ENCODE measurements at regions of chr2 and their contacts with region 1.

Region 1: GRCh38 chr2:11129598-11130449 is 25.4 kb upstream of the SLC66A3 start:
- DNase-seq: no peak
- H3K4me3 ChIP-seq: peak overlapping the region; percentile 24 to 66 (median 35)
- H3K27ac ChIP-seq: peak overlapping the region; percentile 20 to 73 (median 42)
- H3K4me1 ChIP-seq: peaks cover 10 to 53% (median 25%) of the 10 kb centered on the region in 3 donors
- H3K27me3 ChIP-seq: peaks cover 0 to 12% (median 0%) of the 10 kb centered on the region in 4 donors
- CTCF ChIP-seq: peak; percentile 15 to 53 (median 30)
- POLR2A ChIP-seq: no peak

Region 2: DNA sequence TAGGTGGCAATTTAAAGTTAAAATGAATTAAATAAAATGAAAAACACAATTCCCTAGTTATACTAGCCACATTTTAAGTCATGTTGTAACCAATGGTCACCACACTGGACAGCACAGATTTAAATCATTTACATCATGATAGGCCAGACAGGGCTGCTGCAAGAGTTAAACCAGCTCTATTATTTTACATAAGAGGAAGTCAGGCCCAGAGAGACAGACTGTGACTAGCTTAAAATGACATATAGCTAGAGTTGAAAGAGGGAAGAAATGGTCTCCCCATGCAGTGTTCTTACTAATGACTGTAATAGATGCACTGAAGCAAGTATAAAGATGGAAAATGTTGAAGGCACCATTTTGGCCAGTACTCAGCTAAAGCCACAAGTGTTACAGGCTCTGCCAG is 95.1 kb after region 1 on chr2:
- intact Hi-C with region 1: loop called (anchors 10 kb)
- DNase-seq: no peak
- H3K4me3 ChIP-seq: no peak overlapping the region
- H3K27ac ChIP-seq: no peak overlapping the region
- H3K4me1 ChIP-seq: no peaks in the 10 kb centered on the region
- H3K27me3 ChIP-seq: no peaks in the 10 kb centered on the region
- CTCF ChIP-seq: no peak
- POLR2A ChIP-seq: no peak

Region 3: DNA sequence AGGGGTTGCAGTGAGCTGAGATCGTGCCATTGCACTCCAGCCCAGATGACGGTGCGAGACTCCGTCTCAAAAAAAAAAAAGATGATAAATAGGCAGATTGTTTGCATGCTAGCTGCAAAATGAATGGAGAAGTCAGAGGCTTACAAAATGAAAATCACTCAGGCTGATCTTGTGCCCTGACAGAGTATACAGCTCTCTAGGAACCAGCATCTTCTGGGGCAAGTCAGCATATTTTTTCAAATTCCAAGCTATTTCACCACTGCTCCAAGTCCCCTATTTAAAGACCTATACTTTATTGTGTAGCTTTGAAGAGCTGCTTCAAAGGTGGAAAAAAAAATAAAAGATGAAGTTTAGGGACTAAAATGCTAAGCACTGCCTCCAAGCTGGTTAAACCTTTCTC is 330.0 kb after region 1 on chr2:
- intact Hi-C with region 1: loop called (anchors 5 kb)
- DNase-seq: no peak
- H3K4me3 ChIP-seq: no peak overlapping the region
- H3K27ac ChIP-seq: no peak overlapping the region
- H3K4me1 ChIP-seq: peaks cover 8 to 57% (median 19%) of the 10 kb centered on the region in 3 donors
- H3K27me3 ChIP-seq: no peaks in the 10 kb centered on the region
- CTCF ChIP-seq: no peak
- POLR2A ChIP-seq: no peak

Region 4: GRCh38 chr2:11573418-11574175 is 443.8 kb after region 1 on chr2:
- intact Hi-C with region 1: loop called (anchors 10 kb)
- DNase-seq: no peak
- H3K4me3 ChIP-seq: no peak overlapping the region
- H3K27ac ChIP-seq: no peak overlapping the region
- H3K4me1 ChIP-seq: no peaks in the 10 kb centered on the region
- H3K27me3 ChIP-seq: peaks cover 0 to 8% (median 0%) of the 10 kb centered on the region in 4 donors
- CTCF ChIP-seq: no peak
- POLR2A ChIP-seq: no peak